Endothelial cell of umbilical vein (primary cell): ENCODE measurements at regions of chr13 and their contacts with region 1.

Region 1: GRCh38 chr13:75715601-75716523 is 79.7 kb downstream of the LMO7 start:
- DNase-seq: peak; percentile 37
- H3K4me3 ChIP-seq: no peak overlapping the region
- H3K27ac ChIP-seq: no peak overlapping the region
- H3K4me1 ChIP-seq: peaks cover 5% of the 10 kb centered on the region
- H3K27me3 ChIP-seq: no peaks in the 10 kb centered on the region
- CTCF ChIP-seq: no peak
- POLR2A ChIP-seq: no peak

Region 2: DNA sequence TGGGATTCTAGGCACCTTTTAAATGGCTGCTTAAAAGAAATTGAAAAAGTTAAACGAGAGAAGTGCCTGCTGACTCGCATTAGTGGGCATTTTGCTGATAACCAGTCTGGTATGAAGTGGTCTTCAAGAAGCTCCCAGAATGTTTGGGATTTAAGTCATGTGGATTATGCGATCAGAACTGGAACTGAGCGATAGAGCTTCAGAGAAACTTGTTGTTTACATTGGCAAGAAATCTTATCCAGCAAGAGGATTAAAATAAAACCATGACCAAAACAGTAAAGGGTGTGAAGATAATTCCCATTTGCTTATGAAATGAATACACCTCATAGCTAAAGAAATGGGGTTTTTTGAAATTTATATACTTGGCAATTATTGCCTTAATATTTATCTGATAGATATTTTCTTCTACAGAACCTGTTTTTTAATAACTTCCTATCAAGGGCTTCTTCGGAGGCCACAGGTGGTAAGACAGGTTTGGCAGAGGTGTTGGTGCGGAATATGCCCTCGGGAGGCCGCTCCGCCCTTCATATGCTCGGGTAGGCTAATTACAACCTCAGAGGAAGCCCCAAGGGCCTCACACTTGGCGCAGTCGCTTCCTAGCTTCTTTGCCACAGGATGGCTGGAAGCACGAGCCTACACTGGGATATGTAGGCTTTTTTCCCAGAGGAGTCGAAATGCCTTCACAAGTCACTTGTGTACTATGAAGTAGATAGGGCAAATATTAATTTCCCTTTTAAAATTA is 11.1 kb before region 1 on chr13:
- CTCF ChIA-PET with region 1: interaction called, 11 read pairs
- POLR2A ChIA-PET with region 1: no interaction called
- dilution Hi-C with region 1: no loop called
- intact Hi-C with region 1: loop called (anchors 1 kb)
- DNase-seq: peak; percentile 57
- H3K4me3 ChIP-seq: no peak overlapping the region
- H3K27ac ChIP-seq: peak overlapping the region; percentile 73
- H3K4me1 ChIP-seq: peaks cover 22% of the 10 kb centered on the region
- H3K27me3 ChIP-seq: no peaks in the 10 kb centered on the region
- CTCF ChIP-seq: no peak
- POLR2A ChIP-seq: no peak